ENCODE measurements at regions of chr10 and their contacts with region 1.

Region 1: GRCh38 chr10:89369156-89370105 is 8.4 kb upstream of the IFIT1B start:
- DNase-seq: peak; percentile 38
- ATAC-seq: no peak
- H3K4me3 ChIP-seq: no peak overlapping the region
- H3K4me3 Mint-ChIP-seq: no peak overlapping the region
- H3K27ac ChIP-seq: no peak overlapping the region
- H3K27ac Mint-ChIP-seq: no peak overlapping the region
- H3K4me1 ChIP-seq: peaks cover 0 to 3% of the 10 kb centered on the region in 2 donors
- H3K4me1 Mint-ChIP-seq: peaks cover 8% of the 10 kb centered on the region
- H3K27me3 ChIP-seq: no peaks in the 10 kb centered on the region
- H3K27me3 Mint-ChIP-seq: peaks cover 3% of the 10 kb centered on the region
- CTCF ChIP-seq: peak; percentile 63

Region 2: DNA sequence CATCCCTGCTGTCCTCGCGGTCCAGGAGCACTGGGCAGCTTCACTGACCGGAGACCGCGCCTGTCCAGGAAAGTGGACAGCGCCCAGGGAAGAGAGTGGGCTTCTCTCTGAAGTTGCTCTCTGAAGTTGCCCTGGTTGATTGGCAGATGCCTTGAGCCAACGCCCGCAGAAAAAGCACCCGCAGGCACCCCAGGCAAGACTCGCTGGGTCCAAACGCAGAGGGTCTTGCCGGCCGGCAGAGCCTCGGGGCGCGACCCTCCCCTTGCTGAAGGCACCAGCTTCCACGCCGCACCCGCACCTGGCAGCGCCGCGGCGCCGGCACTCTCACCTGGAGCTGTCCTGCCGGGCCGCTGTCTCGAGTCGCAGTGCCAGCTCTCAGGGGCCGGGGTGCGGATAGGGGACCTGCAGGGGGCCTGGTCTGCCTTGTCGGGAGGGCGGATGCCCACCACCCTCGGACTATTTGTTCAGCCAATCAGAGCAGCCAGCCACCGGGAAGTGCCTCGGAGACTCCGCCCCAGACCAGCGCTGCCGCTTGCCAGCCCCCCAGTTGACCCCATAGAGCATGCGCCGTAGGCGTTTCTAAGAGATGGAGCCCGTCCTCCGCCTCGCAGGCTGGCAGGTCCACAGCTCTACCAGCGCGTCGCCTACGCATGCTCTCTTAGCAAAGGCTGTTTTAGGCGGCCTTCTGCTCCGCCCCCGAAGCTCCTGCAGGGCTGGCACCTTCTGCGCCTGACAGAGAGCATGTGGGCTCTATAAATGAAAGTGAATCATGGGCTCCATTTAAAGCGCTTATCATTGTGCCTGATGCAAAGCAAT is 117.8 kb before region 1 on chr10 and contains the start of gene LIPA:
- CTCF ChIA-PET with region 1: interaction called, 10 read pairs
- POLR2A ChIA-PET with region 1: no interaction called
- intact Hi-C with region 1: no loop called
- DNase-seq: peak; percentile 99
- ATAC-seq: peak; percentile 95
- H3K4me3 ChIP-seq: peak within 1 kb of the TSS; percentile 65 to 92 (median 84)
- H3K4me3 Mint-ChIP-seq: peak within 1 kb of the TSS; percentile 94
- H3K27ac ChIP-seq: peak within 1 kb of the TSS; percentile 48 to 71
- H3K27ac Mint-ChIP-seq: peak within 1 kb of the TSS; percentile 85
- H3K4me1 ChIP-seq: peaks cover 18% of the 10 kb centered on the region in 2 donors
- H3K4me1 Mint-ChIP-seq: peaks cover 24% of the 10 kb centered on the region
- H3K27me3 ChIP-seq: no peaks in the 10 kb centered on the region
- H3K27me3 Mint-ChIP-seq: no peaks in the 10 kb centered on the region
- CTCF ChIP-seq: no peak
- total RNA-seq, gene LIPA: 36.5 and 38.9 TPM in 2 replicates

Region 3: DNA sequence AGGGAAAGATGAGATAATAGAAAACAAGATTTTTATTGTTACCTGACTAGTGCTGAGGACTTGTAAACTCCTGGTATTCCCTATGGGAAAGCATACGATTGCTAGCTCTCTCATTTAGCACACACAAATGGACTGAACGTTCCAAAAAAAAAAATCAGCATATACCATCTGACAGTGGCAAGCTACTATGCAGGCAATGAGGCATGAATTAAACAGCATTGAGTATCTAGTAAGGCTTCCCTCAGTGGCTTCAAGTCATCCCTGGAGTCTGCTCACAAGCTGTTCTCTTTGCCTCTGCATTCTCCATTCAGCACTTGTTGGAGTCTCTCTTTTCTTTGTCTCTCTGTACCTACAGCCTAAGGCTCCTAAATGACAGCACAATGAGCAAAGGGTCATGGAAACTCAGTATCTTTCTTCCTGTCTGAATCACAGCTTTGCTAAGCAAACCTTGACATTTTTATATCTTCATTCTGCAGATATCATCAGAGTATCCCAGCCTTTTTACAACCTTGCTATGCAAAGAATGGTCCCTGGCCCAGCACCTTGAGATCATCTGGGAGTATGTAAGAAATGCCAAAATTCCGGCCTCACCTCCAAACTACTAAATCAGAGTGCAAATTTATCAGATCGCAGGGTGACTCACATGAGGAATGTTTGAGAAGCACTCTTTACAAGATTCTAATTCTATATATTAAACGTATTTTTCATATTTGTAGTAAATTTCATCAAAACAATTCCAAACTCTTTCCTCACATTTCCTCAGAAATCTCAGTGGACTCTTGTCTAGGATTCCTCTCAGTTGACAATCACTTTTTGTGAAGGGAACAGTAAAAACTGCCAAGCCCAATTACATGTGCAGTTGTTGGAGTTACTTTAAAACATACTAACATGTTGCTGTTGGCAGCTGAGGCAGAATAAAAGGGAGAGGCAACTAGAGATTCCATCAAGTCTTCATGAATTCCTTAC is 107.1 kb before region 1 on chr10:
- CTCF ChIA-PET with region 1: interaction called, 17 read pairs
- POLR2A ChIA-PET with region 1: no interaction called
- intact Hi-C with region 1: no loop called
- DNase-seq: no peak
- ATAC-seq: no peak
- H3K4me3 ChIP-seq: no peak overlapping the region
- H3K4me3 Mint-ChIP-seq: no peak overlapping the region
- H3K27ac ChIP-seq: no peak overlapping the region
- H3K27ac Mint-ChIP-seq: no peak overlapping the region
- H3K4me1 ChIP-seq: peaks cover 4 to 7% of the 10 kb centered on the region in 2 donors
- H3K4me1 Mint-ChIP-seq: peaks cover 6% of the 10 kb centered on the region
- H3K27me3 ChIP-seq: peaks cover 0 to 4% (median 0%) of the 10 kb centered on the region in 4 experiments
- H3K27me3 Mint-ChIP-seq: no peaks in the 10 kb centered on the region
- CTCF ChIP-seq: no peak

Region 4: DNA sequence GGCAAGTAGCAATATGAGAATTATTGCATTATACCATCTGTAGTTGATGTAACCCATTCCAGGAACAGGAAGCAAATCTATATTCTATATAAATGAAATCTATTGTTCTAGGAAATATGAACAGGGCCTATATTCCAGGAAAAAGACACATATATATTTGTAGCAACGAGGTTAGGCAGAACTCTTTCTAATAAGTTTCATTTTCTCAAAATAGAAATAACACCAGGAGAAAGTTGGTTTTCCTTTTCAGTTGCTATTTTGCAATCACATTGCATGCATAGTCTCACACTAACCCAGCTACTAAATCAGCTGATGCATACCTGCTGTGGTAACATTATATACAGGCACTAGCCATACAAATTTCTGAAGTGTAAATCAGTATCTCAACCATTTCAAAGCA is 73.8 kb before region 1 on chr10:
- CTCF ChIA-PET with region 1: interaction called, 34 read pairs
- POLR2A ChIA-PET with region 1: no interaction called
- intact Hi-C with region 1: no loop called
- DNase-seq: no peak
- ATAC-seq: no peak
- H3K4me3 ChIP-seq: no peak overlapping the region
- H3K4me3 Mint-ChIP-seq: peak overlapping the region; percentile 45
- H3K27ac ChIP-seq: peak overlapping the region; percentile 34 to 68
- H3K27ac Mint-ChIP-seq: peak overlapping the region; percentile 93
- H3K4me1 ChIP-seq: peaks cover 21 to 23% of the 10 kb centered on the region in 2 donors
- H3K4me1 Mint-ChIP-seq: peaks cover 28% of the 10 kb centered on the region
- H3K27me3 ChIP-seq: no peaks in the 10 kb centered on the region
- H3K27me3 Mint-ChIP-seq: no peaks in the 10 kb centered on the region
- CTCF ChIP-seq: no peak

Region 5: DNA sequence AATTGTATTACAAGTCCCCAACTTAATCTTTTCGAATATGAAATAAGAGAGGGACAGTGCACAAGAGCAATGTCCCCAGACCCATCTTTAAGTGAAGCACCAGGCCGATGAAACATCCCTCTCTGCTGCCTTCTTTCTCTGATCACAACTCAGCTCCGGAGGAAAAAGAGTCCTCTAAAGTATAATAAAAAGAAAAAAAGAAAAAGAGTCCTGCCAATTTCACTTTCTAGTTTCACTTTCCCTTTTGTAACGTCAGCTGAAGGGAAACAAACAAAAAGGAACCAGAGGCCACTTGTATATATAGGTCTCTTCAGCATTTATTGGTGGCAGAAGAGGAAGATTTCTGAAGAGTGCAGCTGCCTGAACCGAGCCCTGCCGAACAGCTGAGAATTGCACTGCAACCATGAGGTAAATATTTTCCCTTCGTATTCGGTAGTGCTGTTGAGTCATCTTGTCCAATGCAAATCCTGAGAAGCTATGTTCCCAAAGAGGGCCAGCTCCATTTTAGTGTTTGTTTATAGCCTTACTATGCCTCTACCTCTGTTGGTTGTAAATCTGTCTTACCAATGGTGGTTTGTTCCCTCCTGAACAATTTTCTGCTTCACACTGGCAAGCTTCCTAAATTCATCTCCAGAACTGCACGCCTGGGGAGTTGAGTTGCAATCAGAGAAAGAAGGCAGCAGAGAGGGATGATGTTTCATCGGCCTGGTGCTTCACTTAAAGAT is 67.5 kb before region 1 on chr10 and contains the start of gene IFIT2:
- CTCF ChIA-PET with region 1: interaction called, 34 read pairs
- POLR2A ChIA-PET with region 1: no interaction called
- intact Hi-C with region 1: no loop called
- DNase-seq: peak; percentile 87
- ATAC-seq: peak; percentile 95
- H3K4me3 ChIP-seq: peak within 1 kb of the TSS; percentile 57 to 92 (median 76)
- H3K4me3 Mint-ChIP-seq: peak within 1 kb of the TSS; percentile 94
- H3K27ac ChIP-seq: peak within 1 kb of the TSS; percentile 93 to 94
- H3K27ac Mint-ChIP-seq: peak within 1 kb of the TSS; percentile 97
- H3K4me1 ChIP-seq: peaks cover 37% of the 10 kb centered on the region in 2 donors
- H3K4me1 Mint-ChIP-seq: peaks cover 54% of the 10 kb centered on the region
- H3K27me3 ChIP-seq: no peaks in the 10 kb centered on the region
- H3K27me3 Mint-ChIP-seq: no peaks in the 10 kb centered on the region
- CTCF ChIP-seq: no peak
- total RNA-seq, gene IFIT2: 12.4 and 13.4 TPM in 2 replicates

Region 6: GRCh38 chr10:89391917-89392756 is 22.7 kb after region 1 on chr10 and contains the start of gene IFIT1:
- CTCF ChIA-PET with region 1: interaction called, 10 read pairs
- POLR2A ChIA-PET with region 1: no interaction called
- intact Hi-C with region 1: no loop called
- DNase-seq: peak; percentile 78
- ATAC-seq: peak; percentile 87
- H3K4me3 ChIP-seq: peak within 1 kb of the TSS; percentile 59 to 94 (median 64)
- H3K4me3 Mint-ChIP-seq: peak within 1 kb of the TSS; percentile 93
- H3K27ac ChIP-seq: peak within 1 kb of the TSS; percentile 59 to 71
- H3K27ac Mint-ChIP-seq: peak within 1 kb of the TSS; percentile 81
- H3K4me1 ChIP-seq: peaks cover 19 to 20% of the 10 kb centered on the region in 2 donors
- H3K4me1 Mint-ChIP-seq: peaks cover 28% of the 10 kb centered on the region
- H3K27me3 ChIP-seq: no peaks in the 10 kb centered on the region
- H3K27me3 Mint-ChIP-seq: no peaks in the 10 kb centered on the region
- CTCF ChIP-seq: no peak
- total RNA-seq, gene IFIT1: 1.2 and 1.4 TPM in 2 replicates

Region 7: DNA sequence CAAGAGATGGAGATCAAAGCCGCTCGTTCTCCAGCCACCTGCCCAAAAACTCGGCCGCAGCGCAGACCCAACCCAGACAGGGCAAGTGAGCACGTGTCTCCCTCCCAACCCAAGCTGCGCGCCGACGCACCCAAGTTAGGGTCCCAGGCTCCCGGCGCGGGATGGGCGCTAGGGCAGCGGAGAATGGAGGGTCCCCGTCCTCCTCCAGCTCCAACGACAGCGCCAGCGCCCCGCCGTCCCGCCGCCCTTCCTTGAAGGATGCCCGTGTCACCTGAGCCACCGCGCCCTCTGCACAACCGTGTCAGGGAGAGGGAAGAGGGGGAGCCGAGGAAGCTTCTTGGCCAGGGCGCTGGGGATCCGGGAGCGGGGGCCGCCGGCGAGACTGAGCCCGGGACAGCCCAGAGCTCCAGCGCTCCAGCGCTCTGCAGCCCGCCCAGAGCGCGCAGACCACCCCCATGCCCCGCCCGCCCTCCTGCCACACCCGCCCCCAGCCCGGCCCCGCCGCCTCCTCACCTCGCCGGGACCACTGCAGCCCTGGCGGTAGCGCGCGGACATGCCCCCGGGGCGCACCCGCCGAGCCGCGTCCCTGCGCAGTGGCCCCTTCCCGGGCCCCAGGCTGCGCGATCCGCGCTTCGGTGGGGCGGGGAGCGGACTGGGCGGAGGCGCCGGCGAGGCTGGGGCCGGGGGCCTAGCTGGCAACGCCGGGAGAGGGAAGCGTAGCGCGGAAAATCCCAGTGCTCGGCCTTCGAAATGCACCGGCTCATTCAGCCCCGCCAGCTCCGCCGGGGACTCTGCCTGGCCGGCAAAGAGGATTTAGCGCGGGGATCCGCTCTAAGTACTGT is 166.0 kb after region 1 on chr10 and contains the start of gene SLC16A12:
- CTCF ChIA-PET with region 1: no interaction called
- POLR2A ChIA-PET with region 1: no interaction called
- intact Hi-C with region 1: no loop called
- DNase-seq: no peak
- ATAC-seq: no peak
- H3K4me3 ChIP-seq: no peak within 1 kb of the TSS
- H3K4me3 Mint-ChIP-seq: peak within 1 kb of the TSS; percentile 37
- H3K27ac ChIP-seq: no peak within 1 kb of the TSS
- H3K27ac Mint-ChIP-seq: no peak within 1 kb of the TSS
- H3K4me1 ChIP-seq: peaks cover 5 to 14% of the 10 kb centered on the region in 2 donors
- H3K4me1 Mint-ChIP-seq: peaks cover 16% of the 10 kb centered on the region
- H3K27me3 ChIP-seq: peaks cover 0 to 36% (median 26%) of the 10 kb centered on the region in 4 experiments
- H3K27me3 Mint-ChIP-seq: peaks cover 60% of the 10 kb centered on the region
- CTCF ChIP-seq: no peak
- total RNA-seq, gene SLC16A12: not detected in 2 replicates